Panc1 (cell line): ENCODE measurements at regions of chr12 and their contacts with region 1.

Region 1: GRCh38 chr12:57836442-57837375 is 9.8 kb downstream of the CTDSP2 start:
- DNase-seq: no peak
- ATAC-seq: peak; percentile 64
- H3K4me3 ChIP-seq: peak overlapping the region in 1 of 2 experiments; percentile 34; a peak in 2 of 4 replicates
- H3K27ac ChIP-seq: peak overlapping the region; percentile 83
- H3K4me1 ChIP-seq: peaks cover 91% of the 10 kb centered on the region
- H3K27me3 ChIP-seq: no peaks in the 10 kb centered on the region
- CTCF ChIP-seq: no peak

Region 2: GRCh38 chr12:57852620-57853500 is 16.2 kb after region 1 on chr12:
- CTCF ChIA-PET with region 1: interaction called, 20 read pairs
- POLR2A ChIA-PET with region 1: no interaction called
- in situ Hi-C with region 1: no loop called
- intact Hi-C with region 1: no loop called
- DNase-seq: no peak
- ATAC-seq: no peak
- H3K4me3 ChIP-seq: no peak overlapping the region
- H3K27ac ChIP-seq: no peak overlapping the region
- H3K4me1 ChIP-seq: peaks cover 2% of the 10 kb centered on the region; the same call in 1 of the 2 replicates
- H3K27me3 ChIP-seq: no peaks in the 10 kb centered on the region
- CTCF ChIP-seq: no peak

Region 3: DNA sequence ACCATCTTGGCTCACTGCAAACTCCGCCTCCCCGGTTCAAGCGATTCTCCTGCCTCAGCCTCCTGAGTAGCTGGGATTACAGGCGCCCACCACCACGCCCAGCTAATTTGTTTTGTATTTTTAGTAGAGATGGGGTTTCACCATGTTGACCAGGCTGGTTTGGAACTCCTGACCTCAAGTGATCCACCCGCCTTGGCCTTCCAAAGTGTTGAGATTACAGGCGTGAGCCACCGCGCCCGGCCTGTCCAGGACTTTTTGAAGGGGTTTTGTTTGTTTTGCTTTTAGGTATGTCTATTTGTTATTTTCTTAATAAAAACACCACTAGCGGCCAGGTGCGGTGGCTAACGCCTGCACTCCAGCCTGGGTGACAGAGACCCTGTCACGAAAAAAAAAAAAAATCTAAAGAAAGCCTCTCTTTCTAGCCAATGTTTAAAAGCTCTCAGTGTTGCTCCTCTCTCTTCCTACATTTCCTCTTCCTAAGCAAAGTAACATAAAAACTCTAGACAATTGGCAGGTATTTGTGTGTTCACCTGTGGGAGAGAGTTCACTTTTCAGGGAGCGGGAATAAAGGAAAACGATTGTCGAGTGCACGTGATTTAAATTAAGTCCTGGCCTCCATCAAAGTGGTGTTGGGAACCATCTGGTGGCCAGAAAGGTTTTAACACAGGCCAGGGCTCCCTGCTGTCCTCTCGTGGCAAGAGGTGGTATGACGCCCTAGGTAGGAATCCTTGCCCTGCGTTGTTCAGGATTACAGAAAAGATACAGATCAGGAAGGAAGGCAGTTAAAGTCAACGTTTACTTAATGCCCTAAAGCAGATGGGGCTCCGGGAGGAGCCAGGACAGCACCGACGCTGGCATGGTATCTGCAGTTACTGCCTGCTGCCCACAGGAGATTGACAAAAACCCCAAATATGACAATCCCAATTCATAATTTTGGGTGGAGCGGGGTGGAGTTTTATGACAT is 68.4 kb after region 1 on chr12:
- CTCF ChIA-PET with region 1: interaction called, 4 read pairs
- POLR2A ChIA-PET with region 1: interaction called, 4 read pairs
- in situ Hi-C with region 1: no loop called
- intact Hi-C with region 1: loop called (anchors 1 kb)
- DNase-seq: peak; percentile 93
- ATAC-seq: peak; percentile 94
- H3K4me3 ChIP-seq: no peak overlapping the region
- H3K27ac ChIP-seq: peak overlapping the region; percentile 86
- H3K4me1 ChIP-seq: peaks cover 3% of the 10 kb centered on the region; the same call in 1 of the 2 replicates
- H3K27me3 ChIP-seq: no peaks in the 10 kb centered on the region
- CTCF ChIP-seq: peak; percentile 100